Naive thymus-derived CD4-positive, alpha-beta T cell (primary cell): ENCODE measurements at regions of chr19 and their contacts with region 1.

Region 1: DNA sequence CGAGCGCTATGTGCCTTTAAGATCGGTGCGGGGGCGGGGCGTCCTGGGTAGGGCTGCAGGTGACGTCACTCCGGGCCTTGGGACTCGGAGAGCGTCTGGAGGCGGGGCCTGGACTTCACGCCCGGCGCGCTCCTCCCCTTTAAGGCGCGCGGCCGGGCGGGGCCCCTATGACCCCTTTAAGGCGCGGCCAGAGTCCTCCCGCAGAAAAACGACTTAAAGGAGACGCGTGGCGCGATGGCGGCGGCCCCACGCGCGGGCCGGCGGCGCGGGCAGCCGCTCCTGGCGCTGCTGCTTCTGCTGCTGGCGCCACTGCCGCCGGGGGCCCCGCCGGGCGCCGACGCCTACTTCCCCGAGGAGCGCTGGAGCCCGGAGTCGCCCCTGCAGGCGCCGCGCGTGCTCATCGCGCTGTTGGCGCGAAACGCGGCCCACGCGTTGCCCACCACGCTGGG is at the start of gene COLGALT1:
- DNase-seq: peak; percentile 92 to 99 (median 96)
- ATAC-seq: peak; percentile 99
- H3K4me3 ChIP-seq: peak within 1 kb of the TSS; percentile 81
- H3K4me3 Mint-ChIP-seq: peak within 1 kb of the TSS; percentile 73 to 90 (median 84)
- H3K27ac ChIP-seq: peak within 1 kb of the TSS; percentile 76
- H3K27ac Mint-ChIP-seq: peak within 1 kb of the TSS in 6 of 9 donors; percentile 36 to 80 (median 66)
- H3K4me1 ChIP-seq: peaks cover 16% of the 10 kb centered on the region in 2 donors
- H3K4me1 Mint-ChIP-seq: peaks cover 8 to 29% (median 20%) of the 10 kb centered on the region in 7 donors
- H3K27me3 ChIP-seq: no peaks in the 10 kb centered on the region
- H3K27me3 Mint-ChIP-seq: no peaks in the 10 kb centered on the region
- total RNA-seq, gene COLGALT1: 50.1 to 70.6 (median 61.3) TPM

Region 2: DNA sequence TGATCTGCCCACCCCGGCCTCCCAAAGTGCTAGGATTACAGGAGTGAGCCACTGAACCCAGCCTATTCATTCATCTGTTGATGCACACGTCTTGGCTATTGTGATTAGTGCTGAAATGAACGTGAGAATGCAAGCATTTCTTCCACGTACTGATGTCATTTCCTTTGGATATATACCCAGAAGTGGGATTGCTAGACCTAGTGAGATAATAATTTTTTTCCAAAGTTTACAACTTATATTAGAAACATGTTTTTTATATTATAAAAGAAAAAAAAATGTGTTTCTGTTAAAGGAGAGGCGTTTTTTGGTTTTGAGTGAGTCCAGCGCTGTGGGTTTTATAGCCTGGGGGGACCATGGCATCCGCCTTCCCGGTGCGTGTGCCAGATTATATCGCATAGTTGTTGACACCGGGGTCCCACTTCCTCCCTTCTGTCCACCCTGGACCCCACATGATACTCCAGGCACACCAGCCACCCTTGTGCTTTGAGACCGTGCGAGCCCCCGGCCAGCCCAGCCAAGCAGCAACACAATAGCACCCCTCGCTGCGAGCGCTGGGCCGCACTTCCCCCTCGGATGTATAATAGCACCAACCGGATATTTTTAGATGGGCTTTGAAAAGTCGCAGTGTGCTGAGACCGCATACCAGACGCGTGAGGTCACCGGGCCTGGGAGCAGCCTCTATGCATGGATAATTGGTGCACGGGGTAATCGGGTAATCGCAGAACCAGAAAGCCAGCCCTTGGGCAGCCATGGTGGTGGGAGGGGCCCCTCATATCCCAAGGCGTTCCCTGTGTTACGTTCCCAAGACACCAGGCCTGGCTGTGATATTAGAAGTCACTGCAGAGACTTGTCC is 420.3 kb before region 1 on chr19:
- CTCF ChIA-PET with region 1: no interaction called
- POLR2A ChIA-PET with region 1: no interaction called
- intact Hi-C with region 1: no loop called
- DNase-seq: peak in 8 of 9 donors; percentile 19 to 54 (median 46)
- ATAC-seq: peak; percentile 73
- H3K4me3 ChIP-seq: no peak overlapping the region
- H3K4me3 Mint-ChIP-seq: peak overlapping the region; percentile 41 to 89 (median 79)
- H3K27ac ChIP-seq: no peak overlapping the region
- H3K27ac Mint-ChIP-seq: peak overlapping the region; percentile 40 to 92 (median 85)
- H3K4me1 ChIP-seq: peaks cover 4 to 11% of the 10 kb centered on the region in 2 donors
- H3K4me1 Mint-ChIP-seq: peaks cover 0 to 34% (median 23%) of the 10 kb centered on the region in 7 donors
- H3K27me3 ChIP-seq: no peaks in the 10 kb centered on the region
- H3K27me3 Mint-ChIP-seq: no peaks in the 10 kb centered on the region

Region 3: GRCh38 chr19:17226002-17226933 is 329.2 kb before region 1 on chr19 and contains the start of gene OCEL1:
- CTCF ChIA-PET with region 1: no interaction called
- POLR2A ChIA-PET with region 1: no interaction called
- intact Hi-C with region 1: no loop called
- DNase-seq: peak; percentile 91 to 98 (median 97)
- ATAC-seq: peak; percentile 94
- H3K4me3 ChIP-seq: peak within 1 kb of the TSS; percentile 98
- H3K4me3 Mint-ChIP-seq: peak within 1 kb of the TSS; percentile 82 to 98 (median 94)
- H3K27ac ChIP-seq: peak within 1 kb of the TSS; percentile 81
- H3K27ac Mint-ChIP-seq: peak within 1 kb of the TSS; percentile 86 to 99 (median 97)
- H3K4me1 ChIP-seq: peaks cover 0 to 2% of the 10 kb centered on the region in 2 donors
- H3K4me1 Mint-ChIP-seq: peaks cover 3 to 8% (median 5%) of the 10 kb centered on the region in 7 donors
- H3K27me3 ChIP-seq: no peaks in the 10 kb centered on the region
- H3K27me3 Mint-ChIP-seq: no peaks in the 10 kb centered on the region
- total RNA-seq, gene OCEL1: 21.8 to 32.8 (median 29.8) TPM

Region 4: DNA sequence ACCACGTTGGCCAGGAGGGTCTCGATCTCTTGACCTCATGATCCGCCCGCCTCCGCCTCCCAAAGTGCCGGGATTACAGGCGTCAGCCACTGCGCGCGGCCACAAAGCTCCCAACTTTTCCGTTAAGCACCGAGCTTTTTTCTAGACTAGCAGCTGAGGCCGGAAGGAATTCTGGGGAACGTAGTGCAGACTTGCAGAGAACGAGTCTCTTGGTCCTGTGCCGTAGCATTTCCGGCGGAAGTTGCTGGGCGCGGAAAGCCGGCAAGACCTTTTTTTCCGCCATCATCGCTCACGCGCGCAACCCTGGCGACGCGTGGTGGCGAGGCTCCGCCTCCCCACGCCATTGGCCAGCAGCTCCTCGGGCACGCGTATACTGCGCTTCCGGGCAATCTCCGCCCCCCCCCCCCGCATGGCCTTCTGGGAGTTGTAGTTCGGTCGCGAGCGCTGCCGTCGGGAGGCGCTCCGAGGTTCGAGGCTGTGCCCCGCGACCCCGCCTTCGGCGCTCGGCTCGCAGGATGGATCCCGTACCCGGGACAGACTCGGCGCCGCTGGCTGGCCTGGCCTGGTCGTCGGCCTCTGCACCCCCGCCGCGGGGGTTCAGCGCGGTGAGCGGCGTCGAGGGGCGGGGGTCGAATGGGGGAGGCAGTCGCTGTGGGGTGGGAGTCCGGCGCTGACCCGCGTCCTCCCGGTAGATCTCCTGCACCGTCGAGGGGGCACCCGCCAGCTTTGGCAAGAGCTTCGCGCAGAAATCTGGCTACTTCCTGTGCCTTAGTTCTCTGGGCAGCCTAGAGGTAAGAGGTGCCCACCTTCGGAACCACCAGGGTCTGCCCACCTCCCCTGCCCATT is 135.7 kb before region 1 on chr19 and contains the start of gene MVB12A:
- CTCF ChIA-PET with region 1: no interaction called
- POLR2A ChIA-PET with region 1: interaction called, 4 read pairs
- intact Hi-C with region 1: loop called in 1 of 2 experiments (anchors 1 kb)
- DNase-seq: peak; percentile 85 to 98 (median 96)
- ATAC-seq: peak; percentile 99
- H3K4me3 ChIP-seq: peak within 1 kb of the TSS; percentile 79
- H3K4me3 Mint-ChIP-seq: peak within 1 kb of the TSS; percentile 87 to 95 (median 91)
- H3K27ac ChIP-seq: peak within 1 kb of the TSS; percentile 70
- H3K27ac Mint-ChIP-seq: peak within 1 kb of the TSS; percentile 73 to 93 (median 89)
- H3K4me1 ChIP-seq: peaks cover 12 to 15% of the 10 kb centered on the region in 2 donors
- H3K4me1 Mint-ChIP-seq: peaks cover 4 to 28% (median 19%) of the 10 kb centered on the region in 7 donors
- H3K27me3 ChIP-seq: no peaks in the 10 kb centered on the region
- H3K27me3 Mint-ChIP-seq: no peaks in the 10 kb centered on the region
- total RNA-seq, gene MVB12A: 19.5 to 45.1 (median 33.3) TPM

Region 5: GRCh38 chr19:17529239-17530158 is 26.0 kb before region 1 on chr19:
- CTCF ChIA-PET with region 1: no interaction called
- POLR2A ChIA-PET with region 1: no interaction called
- intact Hi-C with region 1: loop called in 1 of 2 experiments (anchors 1 kb)
- DNase-seq: no peak
- ATAC-seq: no peak
- H3K4me3 ChIP-seq: no peak overlapping the region
- H3K4me3 Mint-ChIP-seq: no peak overlapping the region
- H3K27ac ChIP-seq: no peak overlapping the region
- H3K27ac Mint-ChIP-seq: peak overlapping the region in 2 of 9 donors; percentile 18 to 19
- H3K4me1 ChIP-seq: peaks cover 0 to 6% of the 10 kb centered on the region in 2 donors
- H3K4me1 Mint-ChIP-seq: peaks cover 0 to 8% (median 6%) of the 10 kb centered on the region in 7 donors
- H3K27me3 ChIP-seq: no peaks in the 10 kb centered on the region
- H3K27me3 Mint-ChIP-seq: peaks cover 0 to 3% (median 0%) of the 10 kb centered on the region in 5 donors

Region 6: GRCh38 chr19:17579661-17580244 is 24.2 kb after region 1 on chr19:
- CTCF ChIA-PET with region 1: interaction called, 3 read pairs
- POLR2A ChIA-PET with region 1: no interaction called
- intact Hi-C with region 1: loop called in 1 of 2 experiments (anchors 1 kb)
- DNase-seq: peak in 3 of 9 donors; percentile 15 to 48 (median 30)
- ATAC-seq: peak; percentile 77
- H3K4me3 ChIP-seq: no peak overlapping the region
- H3K4me3 Mint-ChIP-seq: no peak overlapping the region
- H3K27ac ChIP-seq: no peak overlapping the region
- H3K27ac Mint-ChIP-seq: peak overlapping the region in 5 of 9 donors; percentile 37 to 68 (median 59)
- H3K4me1 ChIP-seq: no peaks in the 10 kb centered on the region
- H3K4me1 Mint-ChIP-seq: peaks cover 0 to 9% (median 0%) of the 10 kb centered on the region in 7 donors
- H3K27me3 ChIP-seq: no peaks in the 10 kb centered on the region
- H3K27me3 Mint-ChIP-seq: no peaks in the 10 kb centered on the region

Region 7: GRCh38 chr19:17605761-17606745 is 50.5 kb after region 1 on chr19:
- CTCF ChIA-PET with region 1: no interaction called
- POLR2A ChIA-PET with region 1: no interaction called
- intact Hi-C with region 1: no loop called
- DNase-seq: peak; percentile 72 to 93 (median 87)
- ATAC-seq: peak; percentile 96
- H3K4me3 ChIP-seq: peak overlapping the region; percentile 63
- H3K4me3 Mint-ChIP-seq: peak overlapping the region; percentile 64 to 91 (median 81)
- H3K27ac ChIP-seq: peak overlapping the region; percentile 48
- H3K27ac Mint-ChIP-seq: peak overlapping the region in 7 of 9 donors; percentile 63 to 84 (median 74)
- H3K4me1 ChIP-seq: peaks cover 2 to 7% of the 10 kb centered on the region in 2 donors
- H3K4me1 Mint-ChIP-seq: peaks cover 0 to 14% (median 10%) of the 10 kb centered on the region in 7 donors
- H3K27me3 ChIP-seq: no peaks in the 10 kb centered on the region
- H3K27me3 Mint-ChIP-seq: peaks cover 29 to 45% (median 33%) of the 10 kb centered on the region in 5 donors

Region 8: DNA sequence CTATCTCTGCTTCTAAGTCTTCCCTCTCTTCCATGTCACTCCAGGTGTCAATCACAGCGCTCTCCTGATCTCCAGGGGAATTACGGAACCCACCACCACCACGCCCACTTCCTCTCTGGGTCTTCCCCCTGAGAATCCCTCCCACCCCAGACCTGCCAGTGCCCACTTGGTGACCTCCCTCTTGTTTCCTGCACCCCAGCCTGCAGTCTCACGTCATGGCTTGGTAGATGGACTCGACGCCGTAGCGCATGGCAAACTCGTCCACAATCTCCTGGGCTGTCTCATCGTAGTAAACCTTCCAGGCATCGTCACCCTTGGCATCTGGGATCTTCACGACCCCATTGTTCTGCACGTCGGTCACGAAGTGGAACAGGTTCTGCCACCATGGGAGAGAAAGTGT is 85.7 kb after region 1 on chr19:
- CTCF ChIA-PET with region 1: no interaction called
- POLR2A ChIA-PET with region 1: no interaction called
- intact Hi-C with region 1: no loop called
- DNase-seq: no peak
- ATAC-seq: no peak
- H3K4me3 ChIP-seq: no peak overlapping the region
- H3K4me3 Mint-ChIP-seq: no peak overlapping the region
- H3K27ac ChIP-seq: no peak overlapping the region
- H3K27ac Mint-ChIP-seq: no peak overlapping the region
- H3K4me1 ChIP-seq: no peaks in the 10 kb centered on the region
- H3K4me1 Mint-ChIP-seq: no peaks in the 10 kb centered on the region
- H3K27me3 ChIP-seq: no peaks in the 10 kb centered on the region
- H3K27me3 Mint-ChIP-seq: peaks cover 4 to 26% (median 13%) of the 10 kb centered on the region in 5 donors

Region 9: DNA sequence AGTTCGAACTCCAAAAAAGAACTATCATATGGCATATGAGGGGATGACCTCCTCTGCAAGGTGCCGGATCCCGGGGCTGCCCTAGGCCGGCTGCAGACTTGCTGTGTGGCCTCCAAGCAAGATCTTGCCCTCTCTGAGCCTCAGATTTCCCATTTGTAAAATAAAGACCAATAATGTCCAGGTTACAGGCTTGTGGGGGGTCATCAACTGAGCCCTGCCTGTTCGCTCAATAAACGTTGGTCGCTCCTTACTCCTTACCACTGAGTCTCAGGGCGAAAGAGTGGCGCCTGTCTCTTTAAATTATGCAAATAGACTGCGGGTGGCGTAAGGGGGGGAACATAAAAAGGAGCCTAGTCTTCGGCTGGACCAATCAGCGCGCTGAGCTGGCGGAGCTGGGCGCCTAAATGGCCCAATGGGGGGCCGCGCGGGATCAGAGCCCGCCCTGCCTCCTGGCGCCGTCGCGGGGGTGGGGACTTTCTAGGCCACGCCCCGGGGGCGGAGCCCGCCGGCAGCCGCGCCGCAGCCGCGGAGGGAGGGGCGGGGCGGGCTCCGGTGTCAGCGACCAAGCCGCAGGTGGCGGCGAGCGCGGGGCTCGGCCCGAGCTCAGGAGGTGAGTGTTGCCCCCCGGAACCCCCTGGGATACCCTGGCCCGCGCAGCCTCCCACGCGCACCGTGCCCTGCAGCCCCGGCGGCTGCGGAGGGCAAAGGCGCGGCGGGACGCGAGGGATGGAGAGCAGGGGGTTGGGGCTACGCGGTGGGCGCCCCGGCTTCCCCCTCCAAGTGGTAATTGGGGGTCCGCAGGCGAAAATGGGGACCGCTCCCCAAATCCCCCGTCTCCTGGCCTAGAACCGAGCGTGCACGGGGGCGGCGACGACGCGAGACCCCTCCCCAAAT is 191.9 kb after region 1 on chr19:
- CTCF ChIA-PET with region 1: no interaction called
- POLR2A ChIA-PET with region 1: no interaction called
- intact Hi-C with region 1: loop called (anchors 1 to 5 kb)
- DNase-seq: peak; percentile 90 to 99 (median 95)
- ATAC-seq: peak; percentile 96
- H3K4me3 ChIP-seq: peak overlapping the region; percentile 59
- H3K4me3 Mint-ChIP-seq: peak overlapping the region; percentile 87 to 100 (median 94)
- H3K27ac ChIP-seq: peak overlapping the region; percentile 73
- H3K27ac Mint-ChIP-seq: peak overlapping the region; percentile 14 to 88 (median 72)
- H3K4me1 ChIP-seq: peaks cover 31 to 37% of the 10 kb centered on the region in 2 donors
- H3K4me1 Mint-ChIP-seq: peaks cover 35 to 49% (median 39%) of the 10 kb centered on the region in 7 donors
- H3K27me3 ChIP-seq: no peaks in the 10 kb centered on the region
- H3K27me3 Mint-ChIP-seq: no peaks in the 10 kb centered on the region